ENCODE measurements at regions of chr1 and their contacts with region 1.

Region 1: DNA sequence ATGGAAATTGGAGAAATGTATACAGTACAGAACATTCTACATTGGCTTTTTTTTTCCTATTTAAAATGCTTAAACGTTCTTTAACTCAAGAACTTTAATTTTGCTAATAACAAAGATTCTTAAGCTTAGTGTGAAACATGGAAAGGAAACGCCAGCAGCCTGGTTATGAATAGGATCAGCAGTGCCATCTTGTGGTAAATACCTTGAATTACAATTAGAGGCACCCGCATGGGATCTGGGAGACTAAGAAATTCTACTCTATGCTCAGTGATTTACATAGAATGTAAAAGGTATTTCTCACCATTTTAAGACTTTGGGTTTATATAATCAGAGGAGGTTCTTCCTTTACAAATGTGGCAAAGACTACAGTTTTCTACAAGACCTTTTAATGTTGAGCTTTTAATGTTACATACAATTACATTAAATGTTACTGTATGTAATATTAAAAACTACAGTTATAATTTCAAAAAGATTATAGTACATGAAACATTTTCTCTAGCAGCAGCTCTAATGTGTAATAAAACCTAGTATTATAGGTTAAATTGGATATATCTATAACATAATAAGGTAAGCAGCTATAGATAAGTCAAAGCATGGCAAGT is 32.1 kb upstream of the APOBEC4 start:
- DNase-seq: peak; percentile 71
- H3K4me3 Mint-ChIP-seq: no peak overlapping the region
- H3K27ac Mint-ChIP-seq: no peak overlapping the region
- H3K4me1 Mint-ChIP-seq: no peaks in the 10 kb centered on the region
- H3K27me3 Mint-ChIP-seq: no peaks in the 10 kb centered on the region
- CTCF ChIP-seq: peak; percentile 88

Region 2: GRCh38 chr1:182962554-182963115 is 722.6 kb before region 1 on chr1:
- CTCF ChIA-PET with region 1: no interaction called
- POLR2A ChIA-PET with region 1: no interaction called
- intact Hi-C with region 1: loop called (anchors 2 kb)
- DNase-seq: peak; percentile 95
- H3K4me3 Mint-ChIP-seq: peak overlapping the region; percentile 63
- H3K27ac Mint-ChIP-seq: peak overlapping the region; percentile 98
- H3K4me1 Mint-ChIP-seq: peaks cover 13% of the 10 kb centered on the region
- H3K27me3 Mint-ChIP-seq: no peaks in the 10 kb centered on the region
- CTCF ChIP-seq: peak; percentile 98

Region 3: GRCh38 chr1:183600136-183600535 is 85.1 kb before region 1 on chr1:
- CTCF ChIA-PET with region 1: interaction called, 12 read pairs
- POLR2A ChIA-PET with region 1: interaction called, 3 read pairs
- intact Hi-C with region 1: no loop called
- DNase-seq: peak; percentile 96
- H3K4me3 Mint-ChIP-seq: no peak overlapping the region
- H3K27ac Mint-ChIP-seq: peak overlapping the region; percentile 58
- H3K4me1 Mint-ChIP-seq: peaks cover 36% of the 10 kb centered on the region
- H3K27me3 Mint-ChIP-seq: no peaks in the 10 kb centered on the region
- CTCF ChIP-seq: no peak

Region 4: DNA sequence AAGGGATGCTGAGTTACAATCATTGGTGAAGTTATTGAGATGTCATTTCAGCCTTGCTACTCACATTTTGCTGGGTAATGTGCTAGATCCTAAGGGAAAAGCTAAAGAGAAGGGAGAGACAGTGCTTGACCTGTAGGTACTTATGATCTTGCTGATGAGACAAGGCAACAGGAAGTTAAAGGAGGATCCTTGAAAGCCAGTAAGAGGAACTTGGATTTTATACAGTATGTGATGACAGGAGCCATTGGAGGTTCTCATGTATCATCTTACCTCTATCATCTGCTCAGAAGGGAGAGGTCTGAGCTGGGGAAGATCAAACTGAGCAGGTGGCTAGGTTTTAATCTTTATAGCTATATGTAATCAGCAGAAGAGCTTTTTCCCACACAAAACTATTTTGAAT is 38.4 kb before region 1 on chr1:
- CTCF ChIA-PET with region 1: interaction called, 189 read pairs
- POLR2A ChIA-PET with region 1: interaction called, 3 read pairs
- intact Hi-C with region 1: no loop called
- DNase-seq: no peak
- H3K4me3 Mint-ChIP-seq: no peak overlapping the region
- H3K27ac Mint-ChIP-seq: no peak overlapping the region
- H3K4me1 Mint-ChIP-seq: no peaks in the 10 kb centered on the region
- H3K27me3 Mint-ChIP-seq: no peaks in the 10 kb centered on the region
- CTCF ChIP-seq: no peak

Region 5: DNA sequence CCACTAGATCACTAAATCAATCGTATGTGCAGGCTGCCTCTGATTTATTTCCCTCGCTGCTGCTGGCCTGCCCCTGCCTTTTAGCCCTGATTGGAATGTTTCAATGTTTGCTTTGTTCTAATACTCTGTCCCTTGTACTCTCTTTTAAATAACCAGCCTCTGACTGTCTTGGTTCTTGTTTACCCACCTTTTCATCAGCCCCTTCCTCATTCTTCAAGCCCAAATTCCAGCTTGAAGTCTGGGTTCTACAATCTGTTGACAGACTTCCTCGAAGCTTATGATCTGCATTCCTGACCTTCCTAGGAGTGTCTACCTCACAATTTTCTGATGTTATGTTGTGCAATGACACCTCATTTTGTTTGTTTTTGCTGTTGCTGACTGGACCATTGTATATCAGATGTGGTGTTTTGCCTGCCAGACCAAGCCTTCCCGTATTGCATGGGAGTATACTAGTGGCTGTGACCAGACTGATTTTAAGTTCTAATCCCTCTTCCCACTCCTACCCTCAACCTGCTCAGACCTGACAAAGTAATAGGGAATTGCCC is 14.5 kb after region 1 on chr1:
- CTCF ChIA-PET with region 1: interaction called, 65 read pairs
- POLR2A ChIA-PET with region 1: no interaction called
- intact Hi-C with region 1: no loop called
- DNase-seq: peak; percentile 59
- H3K4me3 Mint-ChIP-seq: no peak overlapping the region
- H3K27ac Mint-ChIP-seq: peak overlapping the region; percentile 76
- H3K4me1 Mint-ChIP-seq: peaks cover 14% of the 10 kb centered on the region
- H3K27me3 Mint-ChIP-seq: no peaks in the 10 kb centered on the region
- CTCF ChIP-seq: no peak

Region 6: GRCh38 chr1:183753464-183753891 is 68.3 kb after region 1 on chr1:
- CTCF ChIA-PET with region 1: no interaction called
- POLR2A ChIA-PET with region 1: no interaction called
- intact Hi-C with region 1: no loop called
- DNase-seq: peak; percentile 83
- H3K4me3 Mint-ChIP-seq: no peak overlapping the region
- H3K27ac Mint-ChIP-seq: peak overlapping the region; percentile 73
- H3K4me1 Mint-ChIP-seq: peaks cover 29% of the 10 kb centered on the region
- H3K27me3 Mint-ChIP-seq: no peaks in the 10 kb centered on the region
- CTCF ChIP-seq: no peak

Region 7: DNA sequence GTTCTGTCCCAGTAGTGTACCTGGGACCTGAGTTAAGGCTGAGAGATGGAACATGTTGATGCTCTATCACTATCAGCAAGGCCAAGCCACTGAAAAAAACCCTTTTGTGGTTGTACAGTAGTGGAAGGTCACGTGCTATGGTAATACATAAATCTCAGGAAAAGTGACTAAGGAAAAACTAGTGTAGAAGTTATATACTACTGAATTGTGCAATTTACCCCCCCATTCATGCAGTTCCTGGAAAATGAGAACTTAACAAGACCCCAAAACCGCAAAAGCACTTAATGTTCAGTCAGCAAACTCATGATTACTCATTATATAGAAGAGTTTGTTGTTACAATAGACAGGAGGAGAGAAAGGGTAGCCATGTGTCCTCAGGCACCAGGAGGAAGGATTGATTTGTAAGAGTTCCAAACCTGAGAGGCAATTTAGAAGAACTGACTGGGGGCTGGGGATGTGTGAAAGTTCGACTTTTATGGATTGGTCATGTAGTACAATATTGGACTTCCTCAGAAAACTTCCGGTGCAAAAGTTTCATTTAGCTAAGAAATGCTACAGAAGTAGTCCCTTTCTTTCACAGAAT is 211.3 kb after region 1 on chr1:
- CTCF ChIA-PET with region 1: interaction called, 13 read pairs
- POLR2A ChIA-PET with region 1: no interaction called
- intact Hi-C with region 1: no loop called
- DNase-seq: peak; percentile 79
- H3K4me3 Mint-ChIP-seq: no peak overlapping the region
- H3K27ac Mint-ChIP-seq: no peak overlapping the region
- H3K4me1 Mint-ChIP-seq: peaks cover 6% of the 10 kb centered on the region
- H3K27me3 Mint-ChIP-seq: no peaks in the 10 kb centered on the region
- CTCF ChIP-seq: no peak